ENCODE measurements at regions of chr9 and their contacts with region 1.

Region 1: GRCh38 chr9:76905791-76906650 is at the start of gene PRUNE2:
- DNase-seq: peak; percentile 88 to 94
- ATAC-seq: peak; percentile 93
- H3K4me3 ChIP-seq: peak within 1 kb of the TSS; percentile 97
- H3K27ac ChIP-seq: peak within 1 kb of the TSS; percentile 62
- H3K4me1 ChIP-seq: peaks cover 4 to 6% of the 10 kb centered on the region in 2 donors
- H3K27me3 ChIP-seq: no peaks in the 10 kb centered on the region
- total RNA-seq, gene PRUNE2: 304 to 558 TPM

Region 2: DNA sequence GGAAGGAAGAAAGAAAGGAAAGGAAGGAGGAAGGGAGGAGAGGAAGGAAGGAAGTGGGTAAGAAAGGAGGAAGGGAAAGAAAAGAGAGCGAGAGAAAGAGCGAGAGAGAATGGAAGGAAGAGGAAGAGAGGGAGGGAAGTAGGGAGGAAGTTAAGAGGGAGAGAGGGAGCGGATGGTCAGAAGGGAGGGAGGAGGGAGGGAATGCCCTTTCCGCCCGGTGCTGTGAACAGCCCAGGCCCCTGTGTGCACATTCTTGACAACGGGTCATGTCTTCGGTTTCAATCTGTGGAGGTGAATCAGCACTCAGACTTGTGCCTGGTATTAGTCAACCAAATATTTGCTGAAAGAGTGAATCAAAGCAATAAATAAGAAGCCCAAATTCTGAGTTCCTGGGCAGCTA is 39.3 kb before region 1 on chr9:
- intact Hi-C with region 1: loop called in 1 of 2 experiments (anchors 5 kb)
- DNase-seq: peak; percentile 62 to 82
- ATAC-seq: peak; percentile 36
- H3K4me3 ChIP-seq: no peak overlapping the region
- H3K27ac ChIP-seq: peak overlapping the region in 1 of 2 donors; percentile 37
- H3K4me1 ChIP-seq: peaks cover 4 to 8% of the 10 kb centered on the region in 2 donors
- H3K27me3 ChIP-seq: no peaks in the 10 kb centered on the region

Region 3: GRCh38 chr9:76957258-76957657 is 51.2 kb after region 1 on chr9:
- intact Hi-C with region 1: no loop called
- DNase-seq: no peak
- ATAC-seq: no peak
- H3K4me3 ChIP-seq: no peak overlapping the region
- H3K27ac ChIP-seq: no peak overlapping the region
- H3K4me1 ChIP-seq: peaks cover 0 to 2% of the 10 kb centered on the region in 2 donors
- H3K27me3 ChIP-seq: no peaks in the 10 kb centered on the region